ENCODE measurements at regions of chr14 and their contacts with region 1.

Region 1: DNA sequence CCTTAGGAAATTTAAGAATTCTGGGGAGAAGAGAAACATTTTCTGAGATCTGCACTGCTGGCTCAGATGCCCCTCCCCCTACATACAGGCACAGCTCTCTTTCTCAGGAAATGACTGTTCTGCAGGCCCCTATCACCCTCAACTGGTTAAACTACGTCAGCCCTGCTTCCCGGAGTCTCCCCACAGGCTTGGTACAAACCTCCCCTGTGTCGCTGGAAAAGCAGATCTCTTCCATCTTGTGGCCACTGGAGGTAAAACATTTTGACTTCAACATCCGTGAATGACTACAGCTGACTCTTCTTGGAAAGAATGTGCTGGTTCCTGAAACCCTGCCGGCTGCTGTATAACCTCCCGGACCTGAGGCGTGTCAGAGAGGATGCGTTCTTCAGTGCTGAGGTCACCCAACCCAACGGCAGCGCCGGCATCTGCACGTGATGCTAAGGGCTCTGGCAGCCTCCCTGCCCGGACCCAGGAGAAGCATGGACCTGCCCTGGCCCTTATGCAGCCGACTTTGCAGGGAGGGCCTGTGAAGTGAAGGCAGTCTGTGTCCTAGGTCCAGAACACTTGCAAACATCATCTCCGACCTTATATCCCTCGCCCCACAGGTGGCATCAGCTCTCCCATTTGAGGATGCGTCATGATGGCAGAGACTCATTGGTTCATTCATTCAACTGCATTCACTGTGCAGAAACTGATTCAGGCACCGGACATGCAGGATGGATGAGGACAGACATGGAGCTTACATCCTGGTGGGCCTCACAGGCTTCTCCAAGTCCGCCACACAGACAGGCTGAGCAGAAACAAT is 129.3 kb downstream of the GCH1 start:
- DNase-seq: peak; percentile 91
- H3K4me3 Mint-ChIP-seq: peak overlapping the region; percentile 44
- H3K27ac Mint-ChIP-seq: peak overlapping the region; percentile 80
- H3K4me1 Mint-ChIP-seq: peaks cover 42% of the 10 kb centered on the region
- H3K27me3 Mint-ChIP-seq: peaks cover 4% of the 10 kb centered on the region

Region 2: DNA sequence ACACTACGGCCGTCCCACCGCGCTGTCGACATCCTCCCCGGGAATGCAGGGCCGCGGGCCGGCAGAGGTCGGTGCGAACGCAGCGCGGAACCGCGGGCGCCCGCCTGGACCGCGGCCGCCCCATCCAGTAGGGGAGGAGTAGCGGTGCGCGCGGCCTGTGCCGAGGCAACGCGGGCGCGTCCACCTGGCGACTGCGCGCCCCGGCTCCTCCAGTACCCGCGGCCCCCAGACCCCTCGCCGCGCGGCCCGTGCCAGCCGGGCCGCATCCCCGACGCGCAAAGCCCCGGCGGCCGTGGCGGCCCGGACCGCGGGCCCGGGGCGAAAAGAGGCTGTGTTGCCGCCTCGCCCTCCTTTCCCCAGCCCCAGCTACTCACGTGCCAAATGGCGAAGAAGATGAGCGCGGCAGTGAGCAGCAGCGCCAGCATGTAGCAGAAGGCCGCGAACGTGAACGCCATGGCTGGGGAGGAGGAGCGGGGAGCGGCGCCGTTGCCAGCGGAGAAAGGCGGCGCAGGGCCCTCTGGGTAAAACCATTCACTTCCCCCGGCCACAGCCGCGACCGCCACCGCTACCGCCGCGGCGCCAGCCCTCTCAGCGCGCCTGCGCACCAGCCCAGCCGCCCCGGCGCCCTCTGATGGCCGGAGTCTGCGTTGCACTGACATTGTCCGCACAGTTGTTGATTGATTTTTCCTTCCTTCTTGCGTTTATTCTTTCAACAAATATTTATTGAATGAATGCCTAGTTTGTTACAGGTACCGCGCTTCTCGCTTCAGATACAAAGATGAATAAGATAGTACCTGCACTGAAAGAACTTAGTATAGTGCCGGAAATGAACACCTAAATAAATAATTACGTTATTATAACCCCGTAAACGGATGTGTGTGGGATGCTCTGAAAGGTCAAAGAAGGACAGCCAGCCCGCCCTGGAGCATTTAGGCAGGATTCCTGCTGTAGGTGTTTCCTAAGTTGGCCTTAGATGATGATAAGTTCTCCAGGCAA is 332.2 kb before region 1 on chr14 and contains the start of gene CNIH1:
- CTCF ChIA-PET with region 1: interaction called, 5 read pairs
- POLR2A ChIA-PET with region 1: no interaction called
- intact Hi-C with region 1: loop called (anchors 1 kb)
- DNase-seq: peak; percentile 95
- H3K4me3 Mint-ChIP-seq: peak within 1 kb of the TSS; percentile 88
- H3K27ac Mint-ChIP-seq: peak within 1 kb of the TSS; percentile 93
- H3K4me1 Mint-ChIP-seq: peaks cover 50% of the 10 kb centered on the region
- H3K27me3 Mint-ChIP-seq: no peaks in the 10 kb centered on the region
- total RNA-seq, gene CNIH1: 84.2 to 89.9 TPM

Region 3: GRCh38 chr14:54566410-54567223 is 206.8 kb before region 1 on chr14 and contains the start of gene SAMD4A:
- CTCF ChIA-PET with region 1: interaction called, 296 read pairs
- POLR2A ChIA-PET with region 1: interaction called, 45 read pairs
- intact Hi-C with region 1: loop called (anchors 1 kb)
- DNase-seq: peak; percentile 72
- H3K4me3 Mint-ChIP-seq: peak within 1 kb of the TSS; percentile 91
- H3K27ac Mint-ChIP-seq: peak within 1 kb of the TSS; percentile 72
- H3K4me1 Mint-ChIP-seq: peaks cover 27% of the 10 kb centered on the region
- H3K27me3 Mint-ChIP-seq: peaks cover 7% of the 10 kb centered on the region
- total RNA-seq, gene SAMD4A: 2.4 to 2.6 TPM

Region 4: DNA sequence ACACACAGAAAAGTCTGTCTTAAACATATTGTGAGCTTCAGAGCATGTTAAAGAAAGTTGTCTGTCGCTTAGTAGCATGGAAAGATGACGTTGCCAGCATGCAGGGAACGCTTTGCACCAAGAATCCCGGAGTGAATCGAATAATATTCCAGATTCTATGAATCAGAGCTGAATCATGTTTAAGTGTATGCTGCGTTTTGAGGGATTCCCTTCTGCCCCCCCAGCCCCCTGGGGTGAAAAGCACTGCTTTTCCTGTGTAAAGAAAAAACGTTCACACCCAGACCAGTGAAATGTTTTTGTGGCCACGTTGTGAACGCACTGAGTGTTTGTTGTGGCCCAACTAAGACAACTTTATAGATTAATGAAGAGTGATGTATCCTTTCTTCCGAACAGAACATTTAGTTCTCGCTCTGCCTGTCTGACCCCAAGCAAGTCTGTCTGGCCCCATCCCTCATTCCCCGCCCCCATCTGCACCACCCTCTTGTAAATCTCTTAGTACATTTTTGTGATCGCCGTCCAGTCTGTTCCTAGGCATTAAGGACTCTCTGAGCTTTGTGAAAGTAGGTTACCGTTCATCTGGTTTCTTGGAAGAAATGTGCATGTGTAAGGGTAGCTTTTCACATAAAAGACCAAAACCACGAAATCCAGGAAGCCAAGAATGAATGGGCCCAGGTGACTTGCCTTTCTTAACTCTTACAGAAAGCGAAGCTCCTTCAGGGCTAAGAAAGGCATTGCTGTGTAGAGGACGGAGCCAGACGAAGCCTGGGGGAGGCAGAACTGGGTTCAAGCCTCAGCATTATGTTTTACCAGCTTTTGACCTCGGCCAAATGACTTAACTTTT is 103.4 kb before region 1 on chr14:
- CTCF ChIA-PET with region 1: interaction called, 47 read pairs
- POLR2A ChIA-PET with region 1: interaction called, 4 read pairs
- intact Hi-C with region 1: loop called (anchors 1 kb)
- DNase-seq: peak; percentile 49
- H3K4me3 Mint-ChIP-seq: no peak overlapping the region
- H3K27ac Mint-ChIP-seq: peak overlapping the region; percentile 26
- H3K4me1 Mint-ChIP-seq: peaks cover 43% of the 10 kb centered on the region
- H3K27me3 Mint-ChIP-seq: peaks cover 11% of the 10 kb centered on the region

Region 5: DNA sequence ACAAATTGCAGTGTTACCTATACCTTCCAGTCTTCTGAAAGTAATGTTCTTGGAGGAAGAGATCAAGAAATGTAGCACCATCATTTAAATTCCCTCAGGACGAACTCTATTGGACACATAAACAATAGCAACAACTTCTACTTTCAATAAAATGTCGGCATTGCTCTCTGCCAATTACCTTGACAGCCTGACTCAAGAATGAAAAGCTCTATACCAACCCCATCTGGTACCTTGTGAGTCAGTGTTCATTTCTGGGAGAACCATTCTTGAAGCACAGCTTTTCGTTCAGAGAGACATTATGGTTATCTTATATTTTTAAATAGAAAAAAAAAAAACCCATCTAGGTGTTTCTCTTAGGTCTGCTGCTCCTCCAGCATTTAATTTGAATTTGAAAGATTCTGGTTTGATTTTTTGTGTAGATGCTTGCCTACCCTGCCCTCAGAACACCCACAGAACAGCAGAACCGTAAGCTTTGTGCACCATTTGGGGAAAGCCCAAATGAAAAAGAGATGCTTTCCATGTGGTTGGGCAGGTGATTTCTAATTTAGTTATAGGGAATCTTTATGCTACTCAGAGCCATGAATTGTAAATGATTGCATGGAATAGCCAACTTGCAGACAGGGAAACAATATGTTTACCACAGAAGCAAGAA is 50.5 kb before region 1 on chr14:
- CTCF ChIA-PET with region 1: interaction called, 74 read pairs
- POLR2A ChIA-PET with region 1: no interaction called
- intact Hi-C with region 1: no loop called
- DNase-seq: no peak
- H3K4me3 Mint-ChIP-seq: no peak overlapping the region
- H3K27ac Mint-ChIP-seq: no peak overlapping the region
- H3K4me1 Mint-ChIP-seq: peaks cover under 1% of the 10 kb centered on the region
- H3K27me3 Mint-ChIP-seq: peaks cover 26% of the 10 kb centered on the region

Region 6: DNA sequence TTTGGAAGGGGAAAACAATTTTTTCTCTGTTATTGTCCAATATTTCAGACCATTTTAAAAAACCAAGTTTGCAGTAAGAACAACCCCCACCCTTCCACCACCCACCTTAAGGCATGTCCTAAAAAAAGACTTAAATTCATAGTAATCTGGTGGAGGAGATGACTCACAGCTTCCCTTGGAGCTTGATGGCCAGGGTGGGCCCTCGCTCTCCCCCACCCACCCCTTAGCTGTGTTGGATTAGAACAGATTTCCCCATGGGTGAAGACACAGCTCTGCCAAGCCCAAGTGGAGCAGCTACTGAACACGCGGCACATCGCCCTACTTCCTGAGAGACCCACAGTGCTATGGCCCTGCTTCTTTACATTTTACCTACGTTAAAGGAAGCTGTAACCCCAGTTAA is 11.1 kb before region 1 on chr14:
- CTCF ChIA-PET with region 1: interaction called, 11 read pairs
- POLR2A ChIA-PET with region 1: no interaction called
- intact Hi-C with region 1: no loop called
- DNase-seq: no peak
- H3K4me3 Mint-ChIP-seq: no peak overlapping the region
- H3K27ac Mint-ChIP-seq: no peak overlapping the region
- H3K4me1 Mint-ChIP-seq: peaks cover 24% of the 10 kb centered on the region
- H3K27me3 Mint-ChIP-seq: no peaks in the 10 kb centered on the region

Region 7: DNA sequence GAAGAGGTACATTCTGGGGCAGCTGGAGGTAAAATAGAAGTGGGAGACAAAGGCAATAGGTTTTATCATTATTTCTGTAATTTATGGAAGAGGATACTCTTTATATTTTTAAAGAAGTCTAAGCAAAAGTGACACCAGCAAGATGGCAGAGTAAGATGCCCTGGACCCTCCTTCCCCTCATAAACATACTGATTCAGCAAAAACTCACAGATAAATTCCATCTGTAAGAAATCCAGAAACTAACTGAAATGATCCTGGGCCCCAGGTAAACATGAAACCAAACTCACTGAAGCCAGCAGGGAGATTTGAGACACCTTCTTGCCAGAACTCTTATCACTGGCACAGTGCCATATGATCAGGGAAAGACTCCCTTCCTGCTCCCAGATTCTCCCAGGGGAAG is 49.3 kb after region 1 on chr14:
- CTCF ChIA-PET with region 1: no interaction called
- POLR2A ChIA-PET with region 1: no interaction called
- intact Hi-C with region 1: no loop called
- DNase-seq: no peak
- H3K4me3 Mint-ChIP-seq: no peak overlapping the region
- H3K27ac Mint-ChIP-seq: no peak overlapping the region
- H3K4me1 Mint-ChIP-seq: no peaks in the 10 kb centered on the region
- H3K27me3 Mint-ChIP-seq: peaks cover 6% of the 10 kb centered on the region

Region 8: DNA sequence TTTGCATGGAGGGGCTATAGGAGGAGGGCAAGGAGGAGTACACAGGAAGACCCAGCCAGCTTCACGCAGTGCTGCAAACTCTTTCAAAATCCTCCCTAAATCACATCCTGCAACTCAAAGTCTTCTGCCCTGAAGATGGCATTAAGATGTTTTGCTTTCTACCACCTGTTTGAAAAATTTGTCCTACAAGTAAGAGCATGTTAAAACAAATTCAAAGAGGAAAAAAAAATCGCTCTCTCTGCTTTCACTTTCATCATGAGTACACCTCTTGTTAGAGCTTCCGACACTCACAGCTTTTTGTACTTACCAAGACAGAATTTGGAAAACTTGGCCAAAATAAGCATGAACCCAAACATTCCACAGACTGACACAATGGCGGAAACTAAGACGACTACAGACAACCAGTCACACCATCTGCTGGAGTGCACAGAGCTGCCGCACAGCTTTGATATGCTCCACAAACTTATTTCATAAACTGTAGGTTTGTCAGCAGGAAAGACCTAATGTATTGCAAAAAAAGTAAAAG is 107.9 kb after region 1 on chr14:
- CTCF ChIA-PET with region 1: interaction called, 4 read pairs
- POLR2A ChIA-PET with region 1: no interaction called
- intact Hi-C with region 1: loop called (anchors 5 kb)
- DNase-seq: peak; percentile 34
- H3K4me3 Mint-ChIP-seq: peak overlapping the region; percentile 82
- H3K27ac Mint-ChIP-seq: peak overlapping the region; percentile 94
- H3K4me1 Mint-ChIP-seq: peaks cover 46% of the 10 kb centered on the region
- H3K27me3 Mint-ChIP-seq: no peaks in the 10 kb centered on the region

Region 9: DNA sequence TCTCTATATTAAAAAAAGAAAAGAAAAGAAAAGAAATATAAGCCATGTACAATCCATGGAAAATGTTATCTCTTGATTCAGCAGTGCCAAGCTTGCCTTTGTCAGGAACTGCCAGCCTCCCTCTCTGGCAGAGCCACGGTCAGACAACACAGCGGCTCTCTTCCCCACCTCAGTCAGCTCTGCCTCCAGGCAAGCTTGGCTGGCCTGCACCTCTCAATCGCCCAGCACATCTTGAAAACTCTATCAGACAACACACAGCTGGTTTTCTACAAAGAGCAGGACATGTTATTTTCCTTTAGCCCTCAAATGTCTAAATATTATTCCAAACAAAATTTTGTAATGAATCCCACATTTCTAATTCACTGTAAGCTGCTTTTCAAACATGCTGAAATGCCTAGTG is 149.2 kb after region 1 on chr14:
- CTCF ChIA-PET with region 1: no interaction called
- POLR2A ChIA-PET with region 1: no interaction called
- intact Hi-C with region 1: no loop called
- DNase-seq: no peak
- H3K4me3 Mint-ChIP-seq: no peak overlapping the region
- H3K27ac Mint-ChIP-seq: no peak overlapping the region
- H3K4me1 Mint-ChIP-seq: no peaks in the 10 kb centered on the region
- H3K27me3 Mint-ChIP-seq: no peaks in the 10 kb centered on the region